Right lobe of liver (tissue), 6 donors: ENCODE measurements at regions of chr19 and their contacts with region 1.

Region 1: DNA sequence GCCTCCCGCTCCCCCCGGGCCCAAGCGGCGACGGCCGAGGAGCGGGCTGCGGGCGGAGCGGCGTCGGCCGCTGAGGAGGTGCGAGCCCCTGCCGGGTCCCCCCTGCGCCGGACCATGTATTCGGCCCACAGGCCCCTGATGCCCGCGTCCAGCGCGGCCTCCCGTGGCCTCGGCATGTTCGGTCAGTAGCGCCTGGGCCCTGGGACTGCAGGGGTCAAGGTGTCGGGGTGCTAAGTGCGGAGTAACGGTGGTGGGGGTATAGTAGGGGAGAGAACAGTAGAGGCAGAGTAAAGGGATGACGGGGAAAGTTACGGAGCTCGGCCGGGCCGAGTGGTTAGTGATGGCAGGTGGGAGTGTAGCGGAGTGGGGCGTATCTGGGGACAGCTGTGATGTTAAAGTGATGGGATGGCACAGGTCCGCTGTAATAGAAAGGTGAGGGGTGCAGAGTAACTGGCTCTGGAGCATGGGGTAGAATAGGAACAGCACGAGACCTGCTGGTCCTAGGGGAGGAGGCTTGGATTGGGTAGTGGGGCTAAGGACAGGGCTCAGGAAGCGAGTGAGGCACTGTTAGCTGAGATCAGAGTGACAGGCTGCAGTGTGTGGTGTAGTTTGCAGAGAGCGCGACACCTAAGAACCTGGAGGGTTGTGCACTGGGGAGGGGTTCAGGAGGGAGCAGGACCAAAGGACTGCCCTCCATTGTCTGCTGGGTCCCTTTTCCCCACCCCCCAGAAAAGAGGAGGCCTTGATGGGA is 15.7 kb downstream of the CIC start:
- DNase-seq: peak; percentile 54 to 68 (median 58)
- ATAC-seq: no peak
- H3K4me3 ChIP-seq: peak overlapping the region; percentile 56 to 68 (median 59)
- H3K27ac ChIP-seq: peak overlapping the region in 2 of 3 donors; percentile 50 to 71
- H3K4me1 ChIP-seq: peaks cover 0 to 36% (median 11%) of the 10 kb centered on the region in 4 donors
- H3K27me3 ChIP-seq: no peaks in the 10 kb centered on the region
- CTCF ChIP-seq: no peak
- POLR2A ChIP-seq: no peak

Region 2: GRCh38 chr19:42219812-42220750 is 64.7 kb before region 1 on chr19 and contains the start of gene ZNF526:
- intact Hi-C with region 1: no loop called
- DNase-seq: peak; percentile 97 to 98 (median 98)
- ATAC-seq: peak; percentile 80 to 90 (median 86)
- H3K4me3 ChIP-seq: peak within 1 kb of the TSS; percentile 77 to 93 (median 80)
- H3K27ac ChIP-seq: peak within 1 kb of the TSS; percentile 66 to 89 (median 71)
- H3K4me1 ChIP-seq: peaks cover 0 to 38% (median 13%) of the 10 kb centered on the region in 4 donors
- H3K27me3 ChIP-seq: no peaks in the 10 kb centered on the region
- CTCF ChIP-seq: no peak
- POLR2A ChIP-seq: peak; percentile 43
- total RNA-seq, gene ZNF526: 1.9 to 3.9 (median 3.4) TPM

Region 3: GRCh38 chr19:42254989-42255765 is 29.6 kb before region 1 on chr19 and contains the start of gene ERF:
- intact Hi-C with region 1: loop called in 1 of 2 experiments (anchors 5 kb)
- DNase-seq: peak; percentile 95 to 97 (median 96)
- ATAC-seq: peak; percentile 78 to 87 (median 84)
- H3K4me3 ChIP-seq: peak within 1 kb of the TSS; percentile 86 to 99 (median 98)
- H3K27ac ChIP-seq: peak within 1 kb of the TSS; percentile 97 to 99 (median 99)
- H3K4me1 ChIP-seq: peaks cover 0 to 26% (median 5%) of the 10 kb centered on the region in 4 donors
- H3K27me3 ChIP-seq: no peaks in the 10 kb centered on the region
- CTCF ChIP-seq: peak in 1 of 4 donors; percentile 25
- POLR2A ChIP-seq: peak; percentile 99
- total RNA-seq, gene ERF: 15.4 to 35.7 (median 30.5) TPM